MCF 10A (cell line): ENCODE measurements at regions of chr5 and their contacts with region 1.

Region 1: GRCh38 chr5:169350759-169351240 is 49.9 kb upstream of the SLIT3 start:
- DNase-seq: peak; percentile 100
- H3K4me3 Mint-ChIP-seq: peak overlapping the region; percentile 49
- H3K27ac Mint-ChIP-seq: peak overlapping the region; percentile 75
- H3K4me1 Mint-ChIP-seq: peaks cover 53% of the 10 kb centered on the region
- H3K27me3 Mint-ChIP-seq: no peaks in the 10 kb centered on the region
- CTCF ChIP-seq: no peak

Region 2: DNA sequence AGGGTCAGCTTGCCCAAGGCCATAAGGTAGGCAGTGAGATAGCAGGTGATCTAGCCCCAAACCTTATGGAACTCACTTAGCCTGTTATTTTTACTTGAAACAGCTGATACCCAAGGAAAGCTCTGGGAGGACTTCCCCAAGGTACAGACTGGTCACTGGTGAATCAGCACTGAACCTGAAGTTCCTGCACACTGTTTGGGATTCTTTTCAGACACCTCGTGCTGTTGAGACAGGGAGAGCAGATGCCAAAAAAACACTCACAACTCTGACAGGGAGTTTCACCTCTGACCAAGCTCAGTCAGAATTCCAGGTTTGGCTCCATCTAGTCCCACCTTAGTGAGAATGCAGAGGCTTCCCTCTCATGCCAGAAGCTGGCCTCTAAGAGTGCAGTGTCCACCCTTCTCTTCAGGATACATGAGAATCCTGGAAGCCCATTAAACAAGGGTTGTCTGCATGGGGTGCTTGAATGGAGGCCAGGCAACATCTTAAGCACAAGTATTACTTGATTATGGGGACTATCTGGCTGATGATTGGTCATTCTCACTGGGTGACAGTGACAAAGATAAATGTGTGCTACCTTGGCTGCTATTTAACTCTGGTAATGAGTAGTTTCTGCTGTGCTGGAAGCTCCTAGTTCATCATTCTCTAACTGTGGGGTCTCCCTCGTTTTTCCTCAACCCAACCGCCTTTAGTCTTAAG is 72.9 kb after region 1 on chr5:
- CTCF ChIA-PET with region 1: no interaction called
- POLR2A ChIA-PET with region 1: interaction called, 3 read pairs
- intact Hi-C with region 1: loop called (anchors 5 kb)
- DNase-seq: no peak
- H3K4me3 Mint-ChIP-seq: no peak overlapping the region
- H3K27ac Mint-ChIP-seq: peak overlapping the region; percentile 20
- H3K4me1 Mint-ChIP-seq: peaks cover 16% of the 10 kb centered on the region
- H3K27me3 Mint-ChIP-seq: no peaks in the 10 kb centered on the region
- CTCF ChIP-seq: no peak

Region 3: DNA sequence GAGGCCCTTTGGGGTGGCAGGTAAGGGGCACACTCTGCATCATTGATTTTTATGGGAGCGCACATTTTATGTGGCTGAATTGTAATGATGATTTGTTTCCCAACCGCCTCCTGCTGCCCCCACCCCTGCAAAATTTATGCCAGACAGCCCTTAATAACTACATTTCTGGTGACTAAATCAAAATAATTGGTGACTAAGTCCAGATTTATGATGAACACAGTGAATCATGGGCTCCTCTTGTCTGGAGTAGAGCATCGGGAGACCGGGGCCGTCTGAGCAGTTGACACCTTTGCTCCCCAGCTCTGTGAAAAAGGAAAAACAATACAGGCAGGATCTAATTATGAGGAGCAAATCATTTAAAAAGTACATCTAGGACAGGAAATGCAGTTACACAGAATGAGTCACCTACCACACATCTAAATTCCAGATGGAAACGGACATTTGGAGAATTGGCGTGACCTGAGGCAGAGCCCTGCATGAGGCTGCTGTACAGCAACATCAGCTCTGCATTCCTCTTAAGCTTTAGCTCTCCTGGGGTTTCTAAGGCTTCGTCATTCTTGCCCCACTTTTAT is 345.2 kb after region 1 on chr5:
- CTCF ChIA-PET with region 1: no interaction called
- POLR2A ChIA-PET with region 1: no interaction called
- intact Hi-C with region 1: loop called (anchors 5 kb)
- DNase-seq: peak; percentile 89
- H3K4me3 Mint-ChIP-seq: peak overlapping the region; percentile 46
- H3K27ac Mint-ChIP-seq: peak overlapping the region; percentile 14
- H3K4me1 Mint-ChIP-seq: peaks cover 39% of the 10 kb centered on the region
- H3K27me3 Mint-ChIP-seq: no peaks in the 10 kb centered on the region
- CTCF ChIP-seq: no peak